ENCODE measurements at regions of chr4 and their contacts with region 1.

Region 1: GRCh38 chr4:99563310-99564186 is at the start of gene TRMT10A:
- DNase-seq: peak; percentile 98
- ATAC-seq: peak; percentile 99
- total RNA-seq, gene TRMT10A: 3.5 TPM

Region 2: DNA sequence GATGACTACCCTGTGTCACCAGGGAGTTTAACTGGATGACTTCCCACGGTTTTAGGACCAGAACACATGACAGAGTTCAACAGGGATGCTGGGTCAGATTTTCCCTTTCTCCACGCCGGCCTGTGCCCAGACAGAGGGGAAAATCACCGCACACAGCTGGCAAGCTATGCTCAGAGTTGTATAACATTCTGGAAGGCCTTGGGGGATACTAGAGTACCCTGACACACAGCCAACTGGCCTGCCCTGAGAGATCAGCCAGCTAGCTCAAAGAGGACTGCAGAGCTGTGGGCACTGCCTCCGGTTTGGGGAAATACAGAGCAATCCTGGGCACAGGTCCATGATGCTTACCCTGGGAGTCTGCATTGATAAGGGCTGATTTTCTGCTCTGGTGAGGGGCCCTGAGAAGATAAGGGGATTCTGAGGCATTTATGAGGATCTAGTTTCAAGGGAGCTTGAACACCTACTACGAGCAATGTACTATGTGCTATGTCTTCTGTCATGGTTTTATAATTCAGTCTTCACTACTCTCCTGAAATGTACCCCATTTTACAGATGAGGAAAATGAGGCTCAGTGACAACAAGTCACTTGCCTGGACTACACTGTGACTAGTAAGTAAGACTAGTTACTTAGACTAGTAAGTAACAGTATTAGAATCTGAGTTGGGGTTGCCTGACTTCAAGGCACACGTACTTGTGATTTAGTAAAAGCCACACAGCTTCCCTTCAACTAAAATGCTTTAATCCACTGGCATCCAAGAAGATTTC is 79.4 kb after region 1 on chr4:
- intact Hi-C with region 1: loop called (anchors 2 kb)
- DNase-seq: peak; percentile 86
- ATAC-seq: peak; percentile 96

Region 3: DNA sequence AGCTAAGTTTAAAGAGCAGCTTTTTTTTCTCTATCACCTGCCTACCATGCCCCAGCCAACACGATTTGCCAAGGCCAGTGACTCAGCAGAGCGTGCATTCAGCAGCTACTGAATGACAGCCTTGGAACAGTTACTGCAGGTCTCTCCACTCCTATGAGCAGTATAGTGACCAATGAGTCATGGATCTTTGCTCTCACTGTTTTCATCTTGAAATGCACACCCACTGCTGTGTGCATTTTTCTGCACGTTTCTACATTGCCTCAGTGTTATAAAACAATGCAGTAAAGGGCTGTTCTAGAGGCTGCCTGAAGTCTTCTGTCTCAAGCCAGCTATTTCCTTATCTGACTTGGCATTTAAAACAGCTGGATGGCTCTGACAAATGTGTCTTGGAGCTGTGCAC is 160.1 kb after region 1 on chr4:
- intact Hi-C with region 1: loop called (anchors 2 kb)
- DNase-seq: peak; percentile 63
- ATAC-seq: peak; percentile 93

Region 4: DNA sequence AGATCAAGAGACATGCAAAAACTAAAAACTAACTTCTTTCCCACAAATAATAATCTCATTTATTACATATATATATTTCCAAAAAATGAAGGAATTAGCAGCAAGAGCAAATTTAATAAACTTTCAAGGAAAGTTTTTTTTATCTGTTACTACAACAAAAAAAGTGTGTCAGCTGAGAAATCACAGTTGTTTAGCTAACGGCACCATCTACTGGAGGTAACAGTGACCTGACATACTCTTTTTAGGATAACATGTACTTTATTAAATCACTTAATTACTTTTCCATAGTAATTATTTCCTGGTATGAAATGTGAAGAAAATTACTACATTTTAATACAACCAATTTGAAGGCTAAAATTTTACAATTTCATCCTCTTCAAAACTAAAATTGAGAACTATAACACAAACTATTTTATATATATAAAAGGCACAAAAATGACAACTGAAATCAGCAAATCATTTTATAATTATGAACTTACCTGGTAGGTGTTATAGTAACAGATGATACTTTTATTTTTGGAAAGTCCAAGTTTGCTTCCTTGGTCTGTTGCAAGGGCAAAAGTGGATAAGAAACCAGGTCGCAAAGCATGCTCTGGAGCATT is 321.6 kb after region 1 on chr4:
- intact Hi-C with region 1: loop called (anchors 2 kb)
- DNase-seq: no peak
- ATAC-seq: no peak

Measured in Right ventricle myocardium inferior (tissue), 1 donor.